Panc1 (cell line): ENCODE measurements at regions of chr14 and their contacts with region 1.

Region 1: DNA sequence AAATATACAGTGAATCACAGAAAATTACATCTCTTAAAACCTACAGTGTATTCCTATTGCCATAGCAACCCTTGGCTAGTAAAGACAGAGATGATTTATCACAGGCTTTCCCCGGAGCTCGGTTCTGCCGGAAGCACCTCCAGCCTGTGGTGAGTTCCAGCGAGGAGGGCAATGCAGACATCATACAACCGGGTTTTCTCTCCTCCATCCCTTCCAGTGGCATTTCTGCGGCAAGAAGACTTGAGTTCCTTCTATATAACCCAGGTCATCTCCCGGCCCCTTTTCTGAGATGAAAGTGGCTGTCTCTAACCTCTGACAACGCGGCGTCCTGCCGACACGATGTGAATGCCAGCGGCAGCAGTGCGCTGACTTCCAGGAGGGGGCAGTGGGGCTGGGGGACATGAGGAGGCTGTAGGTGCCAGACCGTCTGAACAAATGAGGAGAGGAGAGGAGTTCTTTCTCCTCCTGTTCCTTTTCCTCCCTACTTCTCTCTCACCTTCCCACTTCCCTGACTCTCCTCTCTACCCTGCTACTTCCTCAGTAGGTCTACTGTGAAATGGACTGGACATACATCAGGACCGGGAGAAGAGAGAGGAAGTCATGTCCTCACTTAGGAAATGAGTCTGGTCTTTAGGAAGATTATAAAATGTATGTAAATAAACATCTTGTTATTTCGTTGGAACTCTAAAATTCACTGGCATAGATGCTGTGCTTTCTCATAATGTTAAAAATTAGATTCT is 68.6 kb upstream of the MAX start:
- DNase-seq: no peak
- ATAC-seq: peak; percentile 78
- H3K4me3 ChIP-seq: peak overlapping the region; percentile 20 to 54
- H3K27ac ChIP-seq: no peak overlapping the region
- H3K4me1 ChIP-seq: no peaks in the 10 kb centered on the region; the same call in 1 of the 2 replicates
- H3K27me3 ChIP-seq: no peaks in the 10 kb centered on the region
- CTCF ChIP-seq: peak; percentile 55

Region 2: DNA sequence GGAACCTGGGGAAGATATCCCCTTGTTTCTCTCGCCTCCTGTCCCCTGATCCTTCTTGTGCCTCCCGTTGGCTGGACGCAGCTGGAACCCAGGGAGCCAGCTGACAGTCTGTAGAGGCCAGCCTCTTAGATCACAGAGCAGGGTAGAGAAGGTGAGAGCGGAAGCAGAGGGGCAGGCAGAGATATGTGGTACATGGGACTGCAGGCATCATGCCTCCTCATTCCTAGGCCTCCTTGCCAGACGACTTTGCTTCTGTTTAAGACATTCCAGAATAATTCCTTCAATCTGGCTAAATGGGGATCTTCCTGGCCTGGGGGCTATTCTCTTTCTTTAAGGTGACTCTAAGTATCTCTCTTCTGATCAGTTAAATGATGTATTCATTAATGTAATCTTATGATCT is 20.8 kb after region 1 on chr14:
- CTCF ChIA-PET with region 1: no interaction called
- POLR2A ChIA-PET with region 1: interaction called, 13 read pairs
- in situ Hi-C with region 1: no loop called
- intact Hi-C with region 1: no loop called
- DNase-seq: no peak
- ATAC-seq: no peak
- H3K4me3 ChIP-seq: no peak overlapping the region
- H3K27ac ChIP-seq: no peak overlapping the region
- H3K4me1 ChIP-seq: no peaks in the 10 kb centered on the region
- H3K27me3 ChIP-seq: no peaks in the 10 kb centered on the region
- CTCF ChIP-seq: no peak

Region 3: DNA sequence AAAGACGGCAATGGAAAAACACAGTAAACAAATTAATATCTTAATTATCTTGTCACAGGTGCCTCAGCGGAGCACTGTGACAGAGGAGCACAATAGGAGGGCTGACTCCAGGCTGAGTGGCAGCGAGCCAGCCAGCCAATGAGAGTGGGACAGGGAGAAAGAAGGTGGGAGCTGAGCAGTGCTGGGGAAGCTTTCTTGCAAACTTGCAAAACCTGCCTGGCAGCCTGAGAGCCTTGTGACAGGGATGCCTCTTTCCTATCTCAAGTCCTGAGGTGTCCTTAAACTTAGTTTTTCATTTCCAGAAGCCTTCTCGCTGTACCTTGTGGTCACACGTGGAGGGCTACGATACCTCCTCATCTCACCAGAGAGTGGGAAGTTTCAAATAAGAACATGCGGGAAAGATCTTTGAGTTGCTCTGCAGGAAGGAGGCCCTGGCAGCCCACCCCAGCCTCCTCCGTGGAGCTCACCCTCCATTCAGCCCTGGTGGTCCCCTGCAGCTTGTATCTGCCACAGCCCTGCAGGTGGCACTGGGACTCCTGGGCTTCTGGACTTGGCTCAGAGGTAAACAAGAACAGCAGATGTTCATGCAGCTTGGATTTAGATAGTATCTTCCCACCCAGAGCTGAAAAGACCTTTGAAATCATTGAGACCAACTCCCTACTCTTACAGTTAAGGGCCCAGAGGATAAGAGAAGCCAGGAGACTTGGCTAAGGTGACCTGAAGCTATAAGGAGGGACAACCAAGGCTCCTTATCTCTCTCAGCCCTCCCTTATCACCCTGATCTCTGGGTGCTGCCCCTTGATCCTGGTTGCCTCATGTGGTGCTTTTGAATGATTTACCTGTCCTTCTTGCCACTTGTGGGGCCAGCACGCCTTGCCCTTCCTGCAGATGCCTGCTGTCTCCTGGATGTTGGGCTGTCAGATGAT is 84.9 kb after region 1 on chr14:
- CTCF ChIA-PET with region 1: no interaction called
- POLR2A ChIA-PET with region 1: no interaction called
- in situ Hi-C with region 1: no loop called
- intact Hi-C with region 1: no loop called
- DNase-seq: no peak
- ATAC-seq: peak; percentile 78
- H3K4me3 ChIP-seq: no peak overlapping the region
- H3K27ac ChIP-seq: peak overlapping the region; percentile 54; the same call in 1 of the 2 replicates
- H3K4me1 ChIP-seq: peaks cover 16% of the 10 kb centered on the region
- H3K27me3 ChIP-seq: no peaks in the 10 kb centered on the region
- CTCF ChIP-seq: no peak

Region 4: GRCh38 chr14:65373679-65374039 is 202.7 kb after region 1 on chr14:
- CTCF ChIA-PET with region 1: no interaction called
- POLR2A ChIA-PET with region 1: no interaction called
- in situ Hi-C with region 1: no loop called
- intact Hi-C with region 1: loop called (anchors 10 kb)
- DNase-seq: no peak
- ATAC-seq: peak; percentile 90
- H3K4me3 ChIP-seq: peak overlapping the region; percentile 33 to 63
- H3K27ac ChIP-seq: no peak overlapping the region
- H3K4me1 ChIP-seq: no peaks in the 10 kb centered on the region
- H3K27me3 ChIP-seq: no peaks in the 10 kb centered on the region
- CTCF ChIP-seq: peak; percentile 52

Region 5: DNA sequence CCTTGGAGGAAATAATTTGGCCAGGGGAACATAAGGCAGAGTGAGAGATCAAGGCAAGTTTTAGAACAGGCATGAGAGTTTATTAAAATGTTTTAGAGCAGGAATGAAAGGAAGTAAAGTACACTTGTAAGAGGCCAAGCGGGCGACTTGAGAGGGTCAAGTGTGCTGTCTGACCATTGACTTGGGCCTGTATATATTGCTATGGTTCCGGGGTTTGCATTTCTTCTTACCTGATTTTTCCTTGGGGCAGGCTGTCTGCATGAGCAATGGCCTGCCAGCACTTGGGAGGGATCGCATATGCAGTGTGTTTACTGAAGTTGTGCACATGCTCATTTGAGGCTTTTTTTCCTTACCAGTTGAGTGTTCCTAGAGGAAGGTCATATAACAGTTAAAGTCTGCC is 456.4 kb after region 1 on chr14:
- CTCF ChIA-PET with region 1: no interaction called
- POLR2A ChIA-PET with region 1: interaction called, 10 read pairs
- in situ Hi-C with region 1: no loop called
- intact Hi-C with region 1: no loop called
- DNase-seq: no peak
- ATAC-seq: no peak
- H3K4me3 ChIP-seq: no peak overlapping the region
- H3K27ac ChIP-seq: no peak overlapping the region
- H3K4me1 ChIP-seq: no peaks in the 10 kb centered on the region
- H3K27me3 ChIP-seq: no peaks in the 10 kb centered on the region
- CTCF ChIP-seq: no peak